ENCODE measurements at regions of chr9 and their contacts with region 1.

Region 1: GRCh38 chr9:33852216-33852826 is 35.4 kb downstream of the UBE2R2 start:
- DNase-seq: peak; percentile 65 to 88 (median 75)
- ATAC-seq: peak; percentile 78 to 82
- H3K4me3 ChIP-seq: no peak overlapping the region
- H3K27ac ChIP-seq: no peak overlapping the region
- H3K4me1 ChIP-seq: peaks cover 9% of the 10 kb centered on the region
- H3K27me3 ChIP-seq: no peaks in the 10 kb centered on the region

Region 2: DNA sequence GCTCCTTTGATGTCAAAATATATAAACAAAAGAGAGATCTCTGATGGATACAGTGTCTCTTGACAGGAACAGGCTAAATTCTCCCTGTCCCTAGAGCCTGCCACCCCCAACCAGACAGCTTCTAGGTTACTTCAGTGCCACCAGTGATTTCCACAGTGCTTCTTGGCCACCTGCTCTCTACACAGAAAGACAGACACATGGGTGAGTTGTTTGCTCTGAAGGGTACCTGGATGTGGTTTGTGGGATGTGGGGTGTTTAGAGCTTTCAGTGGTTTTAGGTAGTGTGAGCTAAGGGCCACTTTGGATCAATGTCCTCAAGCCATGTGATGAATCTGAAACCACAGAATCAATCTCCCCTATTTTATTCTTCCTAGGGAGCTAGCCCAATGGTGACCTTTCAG is 202.9 kb before region 1 on chr9:
- intact Hi-C with region 1: no loop called
- DNase-seq: no peak
- ATAC-seq: no peak
- H3K4me3 ChIP-seq: no peak overlapping the region
- H3K27ac ChIP-seq: no peak overlapping the region
- H3K4me1 ChIP-seq: no peaks in the 10 kb centered on the region
- H3K27me3 ChIP-seq: no peaks in the 10 kb centered on the region

Region 3: DNA sequence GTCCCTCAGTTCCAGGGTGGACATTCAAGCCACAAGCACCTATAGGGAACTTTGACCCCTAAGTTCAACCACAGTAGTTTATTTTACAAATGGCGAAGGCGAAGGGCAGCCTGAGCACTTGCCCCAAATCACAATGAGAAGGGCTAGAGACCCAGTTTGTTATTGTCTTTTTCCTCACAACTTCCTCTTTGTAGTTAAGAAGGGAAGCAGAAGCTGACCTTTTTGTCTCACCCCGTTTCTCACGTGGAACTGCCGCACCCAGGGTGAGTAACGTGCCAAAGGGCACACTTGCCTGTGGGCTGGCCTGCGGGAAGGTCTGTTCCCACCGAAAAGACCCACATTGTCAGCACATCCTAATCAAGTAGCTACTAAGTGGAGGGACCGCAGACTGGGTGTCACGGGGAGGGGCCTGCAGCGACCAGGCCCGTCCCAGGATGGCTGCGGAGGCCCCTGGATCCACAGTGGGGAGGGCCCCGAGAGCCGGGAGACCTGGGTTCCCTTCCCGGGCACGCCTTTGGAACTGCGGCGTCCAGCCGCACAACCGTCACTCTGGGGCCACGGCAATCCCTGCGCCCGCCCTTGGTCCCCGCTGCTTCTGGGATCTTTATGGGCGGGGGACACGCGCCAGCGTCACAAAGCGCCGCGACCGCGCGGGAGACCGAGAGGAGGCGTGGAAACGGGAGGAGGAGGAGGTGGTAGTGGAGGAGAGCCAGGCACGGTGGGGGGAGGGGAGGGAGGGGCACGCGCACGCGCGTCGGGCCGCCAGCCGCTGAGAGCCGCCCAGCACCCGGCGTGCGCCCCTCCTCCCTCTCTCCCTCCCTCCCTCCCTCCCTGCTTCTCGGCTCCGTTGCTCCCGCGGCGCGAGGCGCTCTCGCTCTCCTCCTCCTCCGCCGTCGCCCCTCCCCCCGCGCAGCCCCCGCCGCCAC is 35.7 kb before region 1 on chr9 and contains the start of gene UBE2R2:
- intact Hi-C with region 1: loop called (anchors 2 to 5 kb)
- DNase-seq: peak; percentile 94 to 97 (median 96)
- ATAC-seq: peak; percentile 91 to 94
- H3K4me3 ChIP-seq: peak within 1 kb of the TSS; percentile 99
- H3K27ac ChIP-seq: peak within 1 kb of the TSS; percentile 100
- H3K4me1 ChIP-seq: no peaks in the 10 kb centered on the region
- H3K27me3 ChIP-seq: no peaks in the 10 kb centered on the region
- total RNA-seq, gene UBE2R2: 34.9 to 43.8 (median 38.6) TPM